ENCODE measurements at regions of chr15 and their contacts with region 1.

Region 1: GRCh38 chr15:31215490-31216214 is 111.0 kb upstream of the KLF13 start:
- DNase-seq: peak; percentile 60 to 96 (median 74)

Region 2: DNA sequence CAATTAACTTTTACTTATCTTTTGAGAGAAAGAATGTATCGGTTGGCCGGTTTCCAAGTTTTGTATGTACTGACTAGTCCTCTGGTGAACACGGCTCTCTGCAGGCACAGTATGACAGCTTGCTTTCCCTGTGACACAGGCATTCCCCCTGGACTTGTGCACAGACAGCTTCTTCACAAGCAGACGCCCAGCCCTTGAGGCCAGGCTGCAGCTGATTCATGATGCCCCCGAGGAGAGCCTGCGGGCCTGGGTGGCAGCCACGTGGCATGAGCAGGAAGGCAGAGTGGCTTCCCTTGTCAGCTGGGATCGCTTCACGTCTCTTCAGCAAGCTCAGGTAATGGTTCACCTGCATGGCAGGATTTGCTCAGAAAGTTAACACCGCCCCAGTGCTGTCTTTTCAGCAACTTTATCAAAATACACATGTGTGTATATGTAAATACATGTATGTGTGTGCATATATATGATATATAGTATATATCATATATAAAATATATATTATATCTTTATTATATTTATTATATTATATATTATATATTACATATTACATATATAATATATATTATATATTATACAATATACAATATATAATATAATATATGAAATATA is 286.5 kb before region 1 on chr15:
- intact Hi-C with region 1: no loop called
- DNase-seq: no peak

Region 3: DNA sequence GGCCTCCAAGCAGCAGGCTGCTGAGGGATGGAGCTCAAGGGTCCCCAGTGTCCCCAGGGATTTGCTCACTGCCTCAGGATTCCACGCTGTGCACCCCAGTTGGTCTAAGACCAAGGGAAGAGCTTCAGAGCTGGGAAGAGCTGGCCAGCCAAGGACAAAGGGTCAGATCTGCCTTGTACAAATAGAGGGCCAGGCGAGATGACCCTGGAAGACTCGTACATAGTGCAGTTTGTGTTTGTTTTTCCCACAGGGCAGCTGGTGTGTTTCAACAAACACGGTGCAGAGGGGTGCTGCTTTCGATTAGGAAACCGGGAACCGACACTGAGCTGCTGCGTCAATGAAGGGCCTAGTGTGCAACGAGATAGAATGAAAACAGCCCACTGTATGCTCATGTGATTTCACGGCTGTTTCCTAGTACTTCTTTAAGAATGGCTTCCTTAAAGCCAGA is 58.0 kb before region 1 on chr15:
- intact Hi-C with region 1: no loop called
- DNase-seq: peak in 1 of 10 donors; percentile 44

Region 4: DNA sequence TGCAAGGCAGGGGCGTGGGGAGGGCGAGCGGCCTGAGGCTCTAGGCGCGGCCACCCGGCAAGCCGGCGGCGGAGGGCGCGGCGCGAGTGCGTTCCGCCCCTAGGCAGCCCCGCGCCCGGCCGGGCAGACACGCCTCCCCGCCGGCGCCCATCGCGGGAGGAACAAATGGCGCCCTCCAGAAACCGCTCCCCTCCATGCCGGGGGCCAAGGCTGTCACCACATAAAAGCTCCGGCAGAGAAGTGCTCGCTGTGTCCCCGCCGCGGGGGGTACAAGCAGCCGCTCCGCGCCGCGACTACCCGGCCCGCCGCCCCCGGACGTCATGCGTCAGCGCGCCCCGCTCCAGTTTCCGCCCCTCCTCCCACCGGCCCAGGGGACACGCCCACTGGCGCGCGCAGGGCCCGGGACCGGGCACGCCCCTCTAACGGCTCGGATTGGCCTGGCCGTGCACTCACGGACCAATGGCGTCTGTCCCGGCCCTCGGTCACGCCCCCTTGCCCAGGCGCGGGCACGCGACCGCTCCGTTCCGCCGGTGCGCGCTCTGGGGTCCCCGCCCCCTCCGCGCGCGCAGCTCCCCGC is 110.6 kb after region 1 on chr15:
- intact Hi-C with region 1: loop called (anchors 1 kb)
- DNase-seq: peak; percentile 97 to 100 (median 98)

Region 5: DNA sequence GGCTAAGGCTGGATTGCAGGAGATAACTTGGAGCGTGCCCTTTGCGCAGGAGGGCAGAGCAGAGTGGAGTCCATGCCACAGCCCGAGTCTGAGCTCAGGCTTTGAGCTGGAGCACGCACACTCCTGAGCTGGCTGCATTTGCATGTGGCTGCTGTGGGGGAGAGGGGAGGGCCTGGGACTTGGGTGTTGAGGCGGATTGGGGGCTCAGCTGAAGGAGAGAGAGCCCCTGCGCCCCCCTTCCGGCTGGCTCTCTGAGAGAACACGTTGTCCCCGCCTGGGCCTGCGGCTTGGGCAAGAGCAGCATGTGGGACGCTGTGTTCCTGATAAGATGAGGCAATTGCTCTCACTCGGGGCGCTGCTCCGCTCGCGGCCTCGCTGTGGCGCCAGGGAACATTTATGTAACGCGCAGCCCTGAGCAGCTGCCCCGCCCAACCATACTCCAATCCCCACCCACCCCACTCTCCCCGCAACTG is 150.0 kb after region 1 on chr15:
- intact Hi-C with region 1: loop called (anchors 10 kb)
- DNase-seq: peak; percentile 84 to 99 (median 92)